ENCODE measurements at regions of chr1 and their contacts with region 1.

Region 1: DNA sequence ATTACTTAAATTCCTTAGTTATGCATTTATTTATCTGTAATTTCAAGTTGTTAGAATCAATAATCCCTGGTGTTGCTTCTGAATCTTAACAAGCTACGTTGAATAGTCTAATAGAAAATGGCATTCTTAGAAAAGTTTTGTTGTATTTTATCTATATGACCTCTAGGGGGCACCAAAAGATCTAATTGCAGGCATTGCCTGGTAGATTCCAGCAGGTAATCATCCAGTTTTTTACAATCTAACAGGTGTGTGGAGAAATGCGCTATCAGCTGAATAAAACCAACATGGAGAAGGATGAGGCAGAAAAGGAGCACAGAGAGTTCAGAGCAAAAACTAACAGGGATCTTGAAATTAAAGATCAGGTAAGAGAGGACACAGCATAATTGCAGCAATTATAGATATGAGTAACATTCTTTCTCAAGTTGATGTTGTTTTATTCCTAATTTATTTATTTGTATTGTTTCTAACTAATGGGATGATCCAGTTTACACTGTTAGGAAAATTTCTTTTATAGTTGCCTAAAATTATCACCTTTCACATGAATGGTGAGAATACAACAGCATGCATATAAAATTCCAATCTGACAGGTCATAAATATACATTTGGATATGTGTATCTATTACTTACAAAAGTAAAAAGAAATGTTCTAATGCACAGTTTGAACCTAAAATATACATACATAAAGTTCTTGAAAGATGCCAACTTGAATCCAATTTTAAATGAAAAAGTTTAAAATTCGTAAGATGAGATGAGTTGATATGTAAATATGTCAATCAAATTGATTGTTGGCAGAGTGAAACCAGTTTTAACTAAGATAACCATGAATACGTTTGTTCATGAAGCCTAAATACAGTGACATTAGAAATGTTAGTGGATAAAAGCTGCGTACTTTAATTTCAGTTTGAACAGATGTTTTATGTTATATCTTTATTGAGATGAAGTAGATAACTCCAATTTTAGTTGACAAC is 88.4 kb downstream of the SDCCAG8 start:
- DNase-seq: peak; percentile 20
- ATAC-seq: peak; percentile 63
- H3K4me3 ChIP-seq: no peak overlapping the region
- H3K27ac ChIP-seq: no peak overlapping the region
- H3K4me1 ChIP-seq: no peaks in the 10 kb centered on the region
- H3K27me3 ChIP-seq: no peaks in the 10 kb centered on the region
- CTCF ChIP-seq: peak; percentile 42 to 70 (median 57); a peak in 5 of 6 replicates
- EP300 ChIP-seq: no peak
- POLR2A ChIP-seq: no peak
- RAD21 ChIP-seq: peak; percentile 90

Region 2: DNA sequence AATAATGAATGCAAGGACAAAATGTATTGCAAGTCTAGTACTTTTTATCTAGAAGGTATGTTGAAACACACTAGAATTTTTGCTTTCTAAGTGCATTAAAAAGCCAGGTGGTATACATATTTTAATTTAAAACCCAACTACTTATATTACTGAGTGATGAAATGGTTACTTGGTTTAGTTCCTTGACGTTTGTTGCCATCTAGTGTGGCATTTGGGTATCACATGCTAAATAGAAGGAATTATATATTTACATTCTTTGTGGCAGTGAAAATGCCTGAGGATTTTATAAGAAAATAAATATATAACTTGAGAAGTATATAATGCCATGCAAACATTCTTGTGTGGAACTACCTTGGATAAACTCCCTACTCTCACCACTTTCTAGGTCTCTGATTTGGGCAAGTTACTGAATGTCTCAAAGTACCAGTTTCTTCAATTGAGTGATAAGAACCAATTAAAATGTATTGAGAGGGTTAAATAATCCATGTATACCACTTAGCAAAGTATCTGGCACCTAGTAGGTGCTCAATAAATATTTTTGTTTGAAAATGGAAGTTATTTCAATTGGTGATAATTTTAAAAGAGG is 18.9 kb before region 1 on chr1:
- CTCF ChIA-PET with region 1: interaction called, 11 read pairs
- POLR2A ChIA-PET with region 1: no interaction called
- RAD21 ChIA-PET with region 1: interaction called, 3 read pairs
- SMC1A ChIA-PET with region 1: interaction called, 5 read pairs
- in situ Hi-C with region 1: no loop called
- intact Hi-C with region 1: no loop called
- DNase-seq: no peak
- ATAC-seq: peak; percentile 74
- H3K4me3 ChIP-seq: no peak overlapping the region
- H3K27ac ChIP-seq: no peak overlapping the region
- H3K4me1 ChIP-seq: no peaks in the 10 kb centered on the region
- H3K27me3 ChIP-seq: no peaks in the 10 kb centered on the region
- CTCF ChIP-seq: peak; percentile 53 to 78 (median 63)
- EP300 ChIP-seq: no peak
- POLR2A ChIP-seq: no peak
- RAD21 ChIP-seq: peak; percentile 95

Region 3: GRCh38 chr1:243402868-243403267 is 58.6 kb after region 1 on chr1:
- CTCF ChIA-PET with region 1: interaction called, 39 read pairs
- POLR2A ChIA-PET with region 1: no interaction called
- RAD21 ChIA-PET with region 1: interaction called, 35 read pairs
- SMC1A ChIA-PET with region 1: interaction called, 14 read pairs
- in situ Hi-C with region 1: no loop called
- intact Hi-C with region 1: loop called (anchors 2 kb)
- DNase-seq: no peak
- ATAC-seq: no peak
- H3K4me3 ChIP-seq: no peak overlapping the region
- H3K27ac ChIP-seq: no peak overlapping the region
- H3K4me1 ChIP-seq: no peaks in the 10 kb centered on the region
- H3K27me3 ChIP-seq: no peaks in the 10 kb centered on the region
- CTCF ChIP-seq: no peak
- EP300 ChIP-seq: no peak
- POLR2A ChIP-seq: no peak
- RAD21 ChIP-seq: no peak

Region 4: GRCh38 chr1:243587823-243588560 is 243.7 kb after region 1 on chr1:
- CTCF ChIA-PET with region 1: no interaction called
- POLR2A ChIA-PET with region 1: no interaction called
- RAD21 ChIA-PET with region 1: no interaction called
- SMC1A ChIA-PET with region 1: no interaction called
- in situ Hi-C with region 1: no loop called
- intact Hi-C with region 1: loop called (anchors 10 kb)
- DNase-seq: peak; percentile 60
- ATAC-seq: peak; percentile 90
- H3K4me3 ChIP-seq: no peak overlapping the region
- H3K27ac ChIP-seq: peak overlapping the region; percentile 65
- H3K4me1 ChIP-seq: peaks cover 19% of the 10 kb centered on the region
- H3K27me3 ChIP-seq: no peaks in the 10 kb centered on the region
- CTCF ChIP-seq: no peak
- EP300 ChIP-seq: no peak
- POLR2A ChIP-seq: no peak
- RAD21 ChIP-seq: no peak

Region 5: GRCh38 chr1:243748706-243749283 is 404.5 kb after region 1 on chr1:
- CTCF ChIA-PET with region 1: interaction called, 30 read pairs
- POLR2A ChIA-PET with region 1: no interaction called
- RAD21 ChIA-PET with region 1: interaction called, 12 read pairs
- SMC1A ChIA-PET with region 1: interaction called, 31 read pairs
- in situ Hi-C with region 1: loop called (anchors 10 kb)
- intact Hi-C with region 1: loop called (anchors 1 kb)
- DNase-seq: peak; percentile 28
- ATAC-seq: peak; percentile 99
- H3K4me3 ChIP-seq: no peak overlapping the region
- H3K27ac ChIP-seq: no peak overlapping the region
- H3K4me1 ChIP-seq: no peaks in the 10 kb centered on the region
- H3K27me3 ChIP-seq: no peaks in the 10 kb centered on the region; a peak in 1 of 4 replicates
- CTCF ChIP-seq: peak; percentile 71 to 75 (median 73)
- EP300 ChIP-seq: no peak
- POLR2A ChIP-seq: no peak
- RAD21 ChIP-seq: peak; percentile 90

Region 6: GRCh38 chr1:244272471-244273261 is 928.4 kb after region 1 on chr1:
- CTCF ChIA-PET with region 1: interaction called, 20 read pairs
- POLR2A ChIA-PET with region 1: no interaction called
- RAD21 ChIA-PET with region 1: interaction called, 11 read pairs
- SMC1A ChIA-PET with region 1: interaction called, 11 read pairs
- in situ Hi-C with region 1: loop called (anchors 5 kb)
- intact Hi-C with region 1: loop called (anchors 1 kb)
- DNase-seq: peak; percentile 69
- ATAC-seq: peak; percentile 94
- H3K4me3 ChIP-seq: no peak overlapping the region
- H3K27ac ChIP-seq: no peak overlapping the region
- H3K4me1 ChIP-seq: no peaks in the 10 kb centered on the region
- H3K27me3 ChIP-seq: no peaks in the 10 kb centered on the region
- CTCF ChIP-seq: peak; percentile 88 to 99 (median 99); a peak in 5 of 6 replicates
- EP300 ChIP-seq: no peak
- POLR2A ChIP-seq: no peak
- RAD21 ChIP-seq: peak; percentile 100

Measured in GM12878 (cell line).